Heart right ventricle (tissue), 16 donors: ENCODE measurements at regions of chr1 and their contacts with region 1.

Region 1: DNA sequence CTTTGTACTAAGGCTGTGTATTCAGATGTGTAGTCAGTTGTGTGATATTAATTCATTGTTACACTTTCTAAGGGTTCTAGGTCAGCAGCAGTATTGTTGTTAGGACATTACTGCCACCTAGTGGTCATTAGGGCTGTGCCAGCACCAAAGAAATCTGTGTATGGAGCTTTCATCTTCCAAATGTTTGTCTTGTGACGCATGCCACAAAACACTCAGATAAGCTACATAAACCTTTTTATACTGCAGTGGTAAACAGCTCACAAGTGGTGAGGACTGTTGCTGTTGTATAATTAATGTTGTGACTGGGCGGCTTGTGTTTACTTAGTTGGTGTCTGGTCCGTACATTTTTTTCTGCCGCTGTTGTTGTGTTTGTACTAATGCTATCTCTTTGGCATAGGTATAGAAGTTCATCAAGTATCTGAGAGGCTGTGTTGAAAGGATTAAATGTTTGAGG is 51.7 kb downstream of the S1PR1 start:
- DNase-seq: peak in 1 of 2 donors; percentile 75
- ATAC-seq: peak; percentile 83 to 92 (median 90)
- H3K4me3 ChIP-seq: peak overlapping the region in 3 of 10 donors; percentile 6 to 28 (median 21)
- H3K27ac ChIP-seq: peak overlapping the region in 4 of 10 donors; percentile 0 to 49 (median 21)
- H3K4me1 ChIP-seq: peaks cover 0 to 44% (median 4%) of the 10 kb centered on the region in 9 donors
- H3K27me3 ChIP-seq: no peaks in the 10 kb centered on the region
- CTCF ChIP-seq: peak; percentile 86 to 97 (median 94)

Region 2: DNA sequence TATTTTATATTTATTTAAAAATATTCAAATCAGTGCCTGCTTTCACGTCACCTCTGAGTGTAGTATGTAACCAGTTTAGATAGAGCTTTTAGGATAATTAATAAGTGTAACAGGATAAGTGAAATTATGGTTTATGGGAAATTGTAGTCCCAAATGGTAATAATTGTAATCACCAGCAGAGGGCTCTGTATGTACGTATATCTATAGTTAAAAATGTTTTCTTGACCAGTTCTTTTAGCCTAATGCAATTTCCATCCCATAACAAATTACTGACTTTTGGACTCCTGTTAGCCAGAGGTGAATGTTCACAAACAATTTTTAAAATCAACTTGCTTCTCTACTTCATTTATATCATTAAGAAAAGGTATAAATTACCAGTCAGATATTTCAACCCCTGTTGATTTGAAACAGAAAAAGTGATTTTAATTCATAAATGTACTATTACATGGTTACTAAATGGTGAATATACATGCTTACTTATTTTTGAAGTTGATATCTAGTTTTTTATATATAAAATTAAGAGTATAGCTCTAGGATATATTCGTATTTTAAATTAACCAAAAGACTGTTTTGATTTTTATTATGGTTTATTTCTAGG is 367.3 kb before region 1 on chr1:
- intact Hi-C with region 1: loop called (anchors 2 to 5 kb)
- DNase-seq: peak in 1 of 2 donors; percentile 11
- ATAC-seq: no peak
- H3K4me3 ChIP-seq: no peak overlapping the region
- H3K27ac ChIP-seq: no peak overlapping the region
- H3K4me1 ChIP-seq: peaks cover 0 to 3% (median 0%) of the 10 kb centered on the region in 9 donors
- H3K27me3 ChIP-seq: no peaks in the 10 kb centered on the region
- CTCF ChIP-seq: peak; percentile 30 to 82 (median 77)

Region 3: DNA sequence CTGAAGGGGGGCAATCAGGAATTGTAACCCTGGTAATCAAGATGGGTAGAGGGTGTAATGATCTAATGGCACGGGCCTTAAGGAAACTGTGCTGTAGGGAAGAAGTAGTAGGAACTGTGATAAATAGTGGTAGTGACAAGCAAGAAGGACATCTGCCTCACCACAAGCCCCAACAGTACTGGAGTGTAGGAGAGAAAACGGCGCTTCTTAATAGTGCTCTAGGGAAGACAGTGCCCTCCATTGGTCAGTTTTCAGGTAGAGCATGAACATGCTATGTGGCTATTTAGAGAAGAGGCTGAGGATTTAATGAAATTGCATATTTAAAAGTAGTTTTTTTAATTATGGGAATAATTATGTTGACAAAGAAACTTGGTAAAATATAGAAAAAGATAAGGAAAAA is 360.4 kb before region 1 on chr1:
- intact Hi-C with region 1: loop called in 5 of 10 experiments (anchors 5 kb)
- DNase-seq: no peak
- ATAC-seq: no peak
- H3K4me3 ChIP-seq: no peak overlapping the region
- H3K27ac ChIP-seq: peak overlapping the region in 1 of 10 donors; percentile 66
- H3K4me1 ChIP-seq: peaks cover 0 to 14% (median 0%) of the 10 kb centered on the region in 9 donors
- H3K27me3 ChIP-seq: no peaks in the 10 kb centered on the region
- CTCF ChIP-seq: peak in 3 of 9 donors; percentile 4 to 17 (median 10)

Region 4: GRCh38 chr1:101025657-101026504 is 262.6 kb before region 1 on chr1 and contains the start of gene DPH5:
- intact Hi-C with region 1: loop called in 3 of 10 experiments (anchors 5 to 10 kb)
- DNase-seq: peak; percentile 88 to 93
- ATAC-seq: peak; percentile 95 to 100 (median 98)
- H3K4me3 ChIP-seq: peak within 1 kb of the TSS; percentile 48 to 85 (median 71)
- H3K27ac ChIP-seq: peak within 1 kb of the TSS; percentile 42 to 93 (median 88)
- H3K4me1 ChIP-seq: peaks cover 2 to 44% (median 23%) of the 10 kb centered on the region in 9 donors
- H3K27me3 ChIP-seq: no peaks in the 10 kb centered on the region
- CTCF ChIP-seq: no peak
- total RNA-seq, gene DPH5: 30.6 to 44.3 (median 36.0) TPM

Region 5: DNA sequence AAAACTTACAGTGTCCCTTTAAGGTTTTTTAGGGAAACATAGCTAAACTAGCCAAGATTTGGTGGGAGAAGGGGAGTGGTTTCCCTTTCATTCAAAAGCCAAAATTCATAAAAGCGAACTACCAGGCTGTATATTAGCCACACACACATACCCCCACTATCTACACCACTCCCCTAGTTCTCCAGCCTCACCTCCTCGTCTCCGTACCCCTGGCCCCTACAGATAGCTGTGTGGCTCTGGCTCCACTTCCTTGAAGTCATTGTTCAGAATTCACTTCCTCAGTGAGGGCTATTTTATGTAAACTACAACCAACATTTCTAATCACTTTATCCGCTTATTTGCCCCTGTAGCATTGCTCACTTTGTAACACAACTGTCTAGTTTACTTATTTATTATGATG is 257.6 kb before region 1 on chr1:
- intact Hi-C with region 1: loop called in 3 of 10 experiments (anchors 5 to 10 kb)
- DNase-seq: no peak
- ATAC-seq: no peak
- H3K4me3 ChIP-seq: no peak overlapping the region
- H3K27ac ChIP-seq: peak overlapping the region in 6 of 10 donors; percentile 3 to 48 (median 28)
- H3K4me1 ChIP-seq: peaks cover 0 to 33% (median 9%) of the 10 kb centered on the region in 9 donors
- H3K27me3 ChIP-seq: no peaks in the 10 kb centered on the region
- CTCF ChIP-seq: no peak

Region 6: DNA sequence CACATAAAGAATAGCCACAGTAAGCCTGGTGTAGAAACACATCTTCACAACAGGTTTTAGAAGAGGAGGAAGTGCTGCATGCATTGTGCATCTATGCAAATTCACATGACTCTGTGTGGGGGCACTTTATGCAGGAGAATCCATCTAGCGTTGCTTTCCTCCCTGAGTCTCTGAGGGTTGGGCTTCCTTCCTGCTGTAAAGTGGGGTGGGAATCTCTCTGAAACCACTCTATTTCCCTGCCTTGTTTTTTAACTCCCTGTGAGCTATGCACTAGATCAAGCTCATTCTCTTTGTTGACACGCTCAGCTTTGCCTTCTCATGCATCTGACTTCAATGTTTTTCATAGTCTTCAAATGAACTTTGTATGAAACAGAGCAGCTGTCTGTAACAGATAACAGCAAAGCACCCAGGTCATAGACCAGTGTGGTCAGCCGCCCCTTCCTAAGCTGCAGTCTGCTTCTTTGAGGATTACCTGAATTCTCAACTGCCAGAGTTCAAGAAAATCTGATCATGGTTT is 160.2 kb before region 1 on chr1:
- intact Hi-C with region 1: loop called in 2 of 10 experiments (anchors 5 to 10 kb)
- DNase-seq: no peak
- ATAC-seq: peak in 6 of 8 donors; percentile 29 to 77 (median 47)
- H3K4me3 ChIP-seq: no peak overlapping the region
- H3K27ac ChIP-seq: peak overlapping the region in 2 of 10 donors; percentile 10 to 49
- H3K4me1 ChIP-seq: peaks cover 0 to 15% (median 8%) of the 10 kb centered on the region in 9 donors
- H3K27me3 ChIP-seq: no peaks in the 10 kb centered on the region
- CTCF ChIP-seq: no peak

Region 7: GRCh38 chr1:101136739-101137138 is 151.8 kb before region 1 on chr1:
- intact Hi-C with region 1: loop called in 6 of 10 experiments (anchors 2 to 10 kb)
- DNase-seq: peak in 1 of 2 donors; percentile 25
- ATAC-seq: peak in 7 of 8 donors; percentile 53 to 80 (median 69)
- H3K4me3 ChIP-seq: no peak overlapping the region
- H3K27ac ChIP-seq: peak overlapping the region in 5 of 10 donors; percentile 2 to 50 (median 5)
- H3K4me1 ChIP-seq: peaks cover 0 to 37% (median 29%) of the 10 kb centered on the region in 9 donors
- H3K27me3 ChIP-seq: no peaks in the 10 kb centered on the region
- CTCF ChIP-seq: peak in 6 of 9 donors; percentile 34 to 63 (median 54)

Region 8: DNA sequence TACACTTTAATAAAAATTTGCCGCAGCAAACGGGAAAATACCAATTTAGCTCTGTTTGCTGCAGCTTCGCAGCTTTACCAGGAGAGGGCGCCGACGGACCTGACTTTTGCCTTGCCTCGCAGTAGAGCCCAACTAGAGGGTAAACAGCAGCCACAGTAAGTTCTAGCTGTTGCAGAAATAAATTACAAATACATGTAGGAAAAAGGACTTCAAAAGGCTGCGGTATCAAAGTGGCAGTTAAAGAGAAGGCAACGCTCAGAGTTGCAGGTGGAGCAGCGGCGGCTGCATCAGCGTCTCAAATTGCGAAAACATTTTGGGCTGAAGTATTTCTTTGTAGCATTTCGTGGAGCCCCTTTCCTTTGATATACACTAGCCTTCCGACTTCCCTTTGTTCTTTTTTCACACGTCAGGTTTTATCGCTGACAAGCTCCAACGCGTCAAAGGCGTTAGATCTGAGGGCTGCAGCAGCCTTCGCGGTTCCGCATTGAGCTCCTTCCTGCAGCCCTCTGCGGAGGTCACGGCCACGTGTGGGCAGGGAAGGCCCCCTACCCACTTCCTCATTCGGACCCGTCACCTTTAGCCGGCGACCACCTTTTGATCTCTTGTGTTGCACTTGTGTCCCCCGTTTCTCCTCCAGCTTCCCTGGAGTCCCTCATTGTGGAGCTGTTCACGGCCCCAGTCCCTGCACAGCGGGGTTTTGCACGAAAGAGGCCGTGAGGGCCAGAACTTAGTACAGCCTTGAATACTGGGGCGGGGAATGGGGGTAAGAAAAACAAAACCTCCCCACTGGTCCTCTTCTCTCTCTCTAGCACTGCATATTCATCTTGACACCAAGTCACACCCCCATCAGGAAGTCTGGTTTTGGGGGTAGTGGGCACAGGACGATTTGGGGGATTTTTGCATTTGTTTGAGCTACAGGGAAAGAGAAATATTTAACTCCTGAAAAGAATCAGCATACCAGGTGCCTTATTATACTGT is 21.1 kb after region 1 on chr1:
- intact Hi-C with region 1: no loop called
- DNase-seq: peak; percentile 32 to 38
- ATAC-seq: peak; percentile 55 to 86 (median 74)
- H3K4me3 ChIP-seq: peak overlapping the region in 9 of 10 donors; percentile 6 to 58 (median 50)
- H3K27ac ChIP-seq: peak overlapping the region in 1 of 10 donors; percentile 82
- H3K4me1 ChIP-seq: peaks cover 0 to 36% (median 10%) of the 10 kb centered on the region in 9 donors
- H3K27me3 ChIP-seq: peaks cover 0 to 6% (median 0%) of the 10 kb centered on the region in 7 donors
- CTCF ChIP-seq: peak; percentile 70 to 88 (median 81)

Region 9: GRCh38 chr1:101325144-101325543 is 36.6 kb after region 1 on chr1:
- intact Hi-C with region 1: no loop called
- DNase-seq: no peak
- ATAC-seq: no peak
- H3K4me3 ChIP-seq: no peak overlapping the region
- H3K27ac ChIP-seq: no peak overlapping the region
- H3K4me1 ChIP-seq: no peaks in the 10 kb centered on the region
- H3K27me3 ChIP-seq: peaks cover 0 to 28% (median 0%) of the 10 kb centered on the region in 7 donors
- CTCF ChIP-seq: no peak